Caco-2 (cell line): ENCODE measurements at regions of chr19 and their contacts with region 1.

Region 1: DNA sequence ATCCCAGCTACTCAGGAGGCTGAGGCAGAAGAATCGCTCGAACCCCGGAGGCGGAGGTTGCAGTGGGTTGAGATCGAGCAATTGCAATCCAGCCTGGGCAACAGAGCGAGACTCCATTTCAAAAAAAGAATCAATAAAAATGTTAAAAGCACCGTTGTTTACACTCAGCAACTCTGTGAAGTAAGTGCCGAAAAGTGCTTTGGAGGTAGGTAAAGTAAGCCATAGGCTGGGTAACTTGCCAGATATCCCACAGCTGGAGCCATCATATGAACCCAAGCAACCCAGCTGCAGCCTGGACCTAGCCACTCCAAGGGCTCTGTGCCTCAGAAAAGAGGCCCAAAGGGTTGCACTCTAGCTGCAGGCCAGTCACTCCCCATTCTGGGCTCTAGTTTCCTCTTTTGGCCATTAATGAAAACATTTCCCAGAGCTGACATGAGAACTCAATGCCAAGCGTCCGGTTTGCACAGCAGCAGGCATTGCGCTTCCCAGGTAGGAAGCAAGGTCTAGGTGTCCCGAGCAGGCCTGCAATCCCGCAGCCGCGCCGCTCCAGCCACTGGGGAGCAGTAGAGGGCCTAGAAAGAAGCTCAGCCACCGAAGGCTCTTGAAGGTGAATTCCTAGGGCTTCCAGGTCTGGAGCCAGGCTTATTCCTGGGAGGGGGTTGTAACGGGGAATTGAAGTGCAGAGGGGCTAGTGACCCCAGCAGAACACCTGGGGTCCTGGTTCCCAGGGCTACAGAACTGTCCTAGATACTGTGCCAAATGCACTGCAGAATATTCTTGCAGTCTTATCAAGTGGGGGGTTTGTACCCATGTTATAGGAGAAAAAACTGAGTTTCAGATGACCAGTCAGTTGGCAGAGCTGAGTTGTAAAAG is 4.1 kb upstream of the CD79A start:
- DNase-seq: peak; percentile 92 to 93
- H3K4me3 ChIP-seq: no peak overlapping the region
- H3K4me3 Mint-ChIP-seq: no peak overlapping the region
- H3K27ac Mint-ChIP-seq: peak overlapping the region; percentile 88
- H3K4me1 ChIP-seq: peaks cover 18% of the 10 kb centered on the region
- H3K4me1 Mint-ChIP-seq: peaks cover 9% of the 10 kb centered on the region
- H3K27me3 ChIP-seq: no peaks in the 10 kb centered on the region
- H3K27me3 Mint-ChIP-seq: no peaks in the 10 kb centered on the region
- CTCF ChIP-seq: peak; percentile 80 to 95

Region 2: DNA sequence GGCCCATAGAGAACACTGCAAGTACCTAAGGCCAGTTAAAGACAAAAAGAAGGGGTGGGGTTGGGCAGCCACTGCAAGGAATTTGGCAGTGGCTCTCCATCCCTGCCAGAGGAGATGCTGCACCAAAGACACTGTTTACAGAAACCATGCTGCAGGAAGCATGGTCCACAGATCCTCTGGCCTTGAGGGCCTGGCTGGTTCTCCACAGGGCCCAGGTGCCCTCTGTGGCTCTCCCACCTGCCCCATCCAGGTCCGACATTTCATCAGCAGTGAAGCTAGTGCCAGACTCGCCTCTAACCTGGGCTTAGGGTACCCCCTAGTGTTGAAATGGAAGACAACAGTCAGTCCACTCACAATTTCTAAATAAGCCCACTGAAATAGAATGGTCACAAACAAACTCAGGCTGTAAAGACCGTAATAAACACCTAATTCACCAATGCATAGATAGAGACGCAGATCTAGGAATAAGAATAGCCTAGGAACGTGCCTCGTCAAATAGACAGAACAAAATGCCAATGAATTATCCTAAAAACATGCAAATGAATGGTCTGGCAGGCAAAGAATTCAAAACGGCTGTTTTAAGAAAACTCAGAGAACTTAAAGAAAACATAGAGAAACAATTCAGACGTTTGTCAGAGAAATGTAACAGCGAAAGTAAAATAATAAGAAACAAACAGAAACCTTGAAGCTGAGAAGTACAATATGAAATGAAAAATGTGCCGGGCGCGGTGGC is 51.8 kb before region 1 on chr19:
- CTCF ChIA-PET with region 1: no interaction called
- POLR2A ChIA-PET with region 1: no interaction called
- intact Hi-C with region 1: no loop called
- DNase-seq: peak in 1 of 2 experiments; percentile 75
- H3K4me3 ChIP-seq: no peak overlapping the region
- H3K4me3 Mint-ChIP-seq: no peak overlapping the region
- H3K27ac Mint-ChIP-seq: no peak overlapping the region
- H3K4me1 ChIP-seq: no peaks in the 10 kb centered on the region
- H3K4me1 Mint-ChIP-seq: no peaks in the 10 kb centered on the region
- H3K27me3 ChIP-seq: no peaks in the 10 kb centered on the region
- H3K27me3 Mint-ChIP-seq: peaks cover 21% of the 10 kb centered on the region
- CTCF ChIP-seq: peak; percentile 66 to 81

Region 3: DNA sequence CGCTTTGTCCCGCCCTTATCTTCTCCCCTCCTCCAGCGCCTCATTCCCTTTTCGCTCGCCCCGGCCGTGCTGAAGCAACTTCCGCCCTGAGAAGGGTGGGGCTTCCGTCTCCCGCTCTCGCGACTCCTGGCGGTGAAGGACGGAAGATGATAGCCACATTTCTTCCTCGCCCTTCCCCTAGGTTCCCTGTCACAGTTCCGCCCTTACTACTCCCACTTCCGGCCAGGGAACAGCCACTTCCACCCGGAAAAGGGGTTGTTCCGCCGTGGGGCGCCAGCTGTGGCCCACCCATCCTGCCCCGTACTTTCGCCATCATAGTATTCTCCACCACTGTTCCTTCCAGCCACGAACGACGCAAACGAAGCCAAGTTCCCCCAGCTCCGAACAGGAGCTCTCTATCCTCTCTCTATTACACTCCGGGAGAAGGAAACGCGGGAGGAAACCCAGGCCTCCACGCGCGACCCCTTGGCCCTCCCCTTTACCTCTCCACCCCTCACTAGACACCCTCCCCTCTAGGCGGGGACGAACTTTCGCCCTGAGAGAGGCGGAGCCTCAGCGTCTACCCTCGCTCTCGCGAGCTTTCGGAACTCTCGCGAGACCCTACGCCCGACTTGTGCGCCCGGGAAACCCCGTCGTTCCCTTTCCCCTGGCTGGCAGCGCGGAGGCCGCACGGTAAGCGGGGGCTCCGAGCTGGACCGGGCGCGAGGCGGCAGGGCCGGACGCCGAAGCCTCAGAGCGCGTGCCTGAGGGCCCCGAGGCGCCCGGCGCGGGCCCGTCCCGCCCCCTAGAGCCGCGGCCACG is 13.2 kb before region 1 on chr19 and contains the start of gene RPS19:
- CTCF ChIA-PET with region 1: interaction called, 5 read pairs
- POLR2A ChIA-PET with region 1: interaction called, 21 read pairs
- intact Hi-C with region 1: no loop called
- DNase-seq: peak; percentile 98 to 99
- H3K4me3 ChIP-seq: peak within 1 kb of the TSS; percentile 88
- H3K4me3 Mint-ChIP-seq: peak within 1 kb of the TSS; percentile 84
- H3K27ac Mint-ChIP-seq: peak within 1 kb of the TSS; percentile 94
- H3K4me1 ChIP-seq: peaks cover 18% of the 10 kb centered on the region
- H3K4me1 Mint-ChIP-seq: peaks cover 5% of the 10 kb centered on the region
- H3K27me3 ChIP-seq: no peaks in the 10 kb centered on the region
- H3K27me3 Mint-ChIP-seq: peaks cover 1% of the 10 kb centered on the region
- CTCF ChIP-seq: peak; percentile 63 to 81
- total RNA-seq, gene RPS19: 3,297 and 3,418 TPM in 2 replicates

Region 4: GRCh38 chr19:41934849-41935374 is 61.9 kb after region 1 on chr19:
- CTCF ChIA-PET with region 1: interaction called, 3 read pairs
- POLR2A ChIA-PET with region 1: no interaction called
- intact Hi-C with region 1: loop called (anchors 1 kb)
- DNase-seq: peak; percentile 87 to 90
- H3K4me3 ChIP-seq: no peak overlapping the region
- H3K4me3 Mint-ChIP-seq: no peak overlapping the region
- H3K27ac Mint-ChIP-seq: no peak overlapping the region
- H3K4me1 ChIP-seq: peaks cover 16% of the 10 kb centered on the region
- H3K4me1 Mint-ChIP-seq: peaks cover 23% of the 10 kb centered on the region
- H3K27me3 ChIP-seq: no peaks in the 10 kb centered on the region
- H3K27me3 Mint-ChIP-seq: peaks cover 10% of the 10 kb centered on the region
- CTCF ChIP-seq: peak; percentile 88 to 93

Region 5: DNA sequence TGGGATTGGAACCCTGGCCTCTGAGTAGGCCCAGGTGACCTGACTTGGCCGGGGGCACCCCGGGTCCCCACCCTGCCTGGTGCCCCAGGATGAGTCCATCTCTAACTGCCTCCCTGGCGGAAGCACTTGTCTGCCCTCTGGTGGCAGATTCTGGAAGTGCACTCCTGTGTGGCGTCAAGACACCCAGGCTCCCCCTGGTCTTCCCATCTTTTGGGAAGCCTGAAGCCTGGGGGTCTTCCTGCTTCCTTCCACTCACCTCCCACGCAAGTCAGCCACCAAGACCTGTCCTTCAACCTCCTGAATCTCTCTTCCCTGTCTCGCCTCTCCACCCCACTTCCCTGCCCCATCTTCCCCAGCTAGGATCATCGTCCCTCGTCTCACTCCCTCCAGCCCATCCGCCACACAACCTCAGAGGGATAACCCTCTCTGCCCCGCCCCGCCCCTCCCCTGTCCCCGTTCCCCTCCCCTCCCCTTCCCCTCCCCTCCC is 78.7 kb after region 1 on chr19:
- CTCF ChIA-PET with region 1: interaction called, 5 read pairs
- POLR2A ChIA-PET with region 1: no interaction called
- intact Hi-C with region 1: loop called (anchors 1 kb)
- DNase-seq: peak; percentile 84 to 89
- H3K4me3 ChIP-seq: no peak overlapping the region
- H3K4me3 Mint-ChIP-seq: no peak overlapping the region
- H3K27ac Mint-ChIP-seq: no peak overlapping the region
- H3K4me1 ChIP-seq: no peaks in the 10 kb centered on the region
- H3K4me1 Mint-ChIP-seq: no peaks in the 10 kb centered on the region
- H3K27me3 ChIP-seq: no peaks in the 10 kb centered on the region
- H3K27me3 Mint-ChIP-seq: no peaks in the 10 kb centered on the region
- CTCF ChIP-seq: peak; percentile 98 to 99

Region 6: DNA sequence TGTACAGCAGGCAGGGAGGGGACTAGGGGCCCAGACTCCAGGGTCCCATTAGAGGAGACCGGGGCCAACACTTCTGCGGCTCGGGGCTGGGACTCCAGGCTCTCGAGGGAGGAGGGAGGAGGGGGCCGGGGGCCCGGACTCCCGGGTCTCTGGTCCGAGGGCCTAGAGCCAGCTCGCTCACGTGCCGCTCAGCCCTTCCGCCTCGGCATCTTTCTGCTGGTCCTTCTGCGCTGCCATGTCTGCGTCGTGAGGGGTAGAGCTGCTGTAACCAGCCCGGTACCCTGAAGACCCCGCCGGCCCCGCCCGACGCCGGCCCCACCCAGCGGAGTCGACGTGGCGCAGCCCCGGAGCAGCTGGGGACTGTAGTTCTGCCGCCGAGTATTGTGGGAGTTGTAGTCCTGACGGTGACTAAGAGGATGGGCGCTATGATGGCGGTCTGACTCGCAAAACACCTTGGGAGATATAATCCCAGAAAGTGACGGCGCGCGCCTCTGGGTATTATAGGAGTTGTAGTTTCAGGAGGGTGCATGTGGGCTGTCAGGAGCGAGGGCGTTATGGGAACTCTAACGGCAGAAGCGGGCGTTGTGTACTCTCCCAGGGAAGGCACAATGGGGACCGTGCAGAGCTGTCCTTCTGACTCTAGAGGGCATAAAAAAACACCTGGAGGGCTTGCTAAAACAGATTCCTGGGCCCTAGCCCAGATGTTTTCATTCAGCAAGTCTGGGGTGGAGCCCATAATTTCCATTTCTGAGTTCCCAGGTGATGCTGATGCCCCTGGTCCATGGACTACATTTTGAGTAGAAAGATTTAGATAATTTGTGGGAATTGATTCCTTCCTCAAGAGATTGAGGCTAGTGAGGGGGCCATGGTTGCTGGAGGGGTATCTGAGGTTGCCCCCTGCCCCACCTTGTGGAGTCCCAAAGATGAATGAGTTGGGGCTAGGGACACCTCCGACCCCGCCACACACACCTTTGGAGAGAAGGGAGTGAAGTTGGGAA is 86.3 kb after region 1 on chr19 and contains the start of gene RABAC1:
- CTCF ChIA-PET with region 1: interaction called, 18 read pairs
- POLR2A ChIA-PET with region 1: no interaction called
- intact Hi-C with region 1: loop called (anchors 1 kb)
- DNase-seq: peak; percentile 93 to 95
- H3K4me3 ChIP-seq: peak within 1 kb of the TSS; percentile 82
- H3K4me3 Mint-ChIP-seq: peak within 1 kb of the TSS; percentile 78
- H3K27ac Mint-ChIP-seq: peak within 1 kb of the TSS; percentile 81
- H3K4me1 ChIP-seq: peaks cover 14% of the 10 kb centered on the region
- H3K4me1 Mint-ChIP-seq: peaks cover 13% of the 10 kb centered on the region
- H3K27me3 ChIP-seq: no peaks in the 10 kb centered on the region
- H3K27me3 Mint-ChIP-seq: no peaks in the 10 kb centered on the region
- CTCF ChIP-seq: peak in 1 of 2 experiments; percentile 44
- total RNA-seq, gene RABAC1: 64.4 and 70.7 TPM in 2 replicates

Region 7: DNA sequence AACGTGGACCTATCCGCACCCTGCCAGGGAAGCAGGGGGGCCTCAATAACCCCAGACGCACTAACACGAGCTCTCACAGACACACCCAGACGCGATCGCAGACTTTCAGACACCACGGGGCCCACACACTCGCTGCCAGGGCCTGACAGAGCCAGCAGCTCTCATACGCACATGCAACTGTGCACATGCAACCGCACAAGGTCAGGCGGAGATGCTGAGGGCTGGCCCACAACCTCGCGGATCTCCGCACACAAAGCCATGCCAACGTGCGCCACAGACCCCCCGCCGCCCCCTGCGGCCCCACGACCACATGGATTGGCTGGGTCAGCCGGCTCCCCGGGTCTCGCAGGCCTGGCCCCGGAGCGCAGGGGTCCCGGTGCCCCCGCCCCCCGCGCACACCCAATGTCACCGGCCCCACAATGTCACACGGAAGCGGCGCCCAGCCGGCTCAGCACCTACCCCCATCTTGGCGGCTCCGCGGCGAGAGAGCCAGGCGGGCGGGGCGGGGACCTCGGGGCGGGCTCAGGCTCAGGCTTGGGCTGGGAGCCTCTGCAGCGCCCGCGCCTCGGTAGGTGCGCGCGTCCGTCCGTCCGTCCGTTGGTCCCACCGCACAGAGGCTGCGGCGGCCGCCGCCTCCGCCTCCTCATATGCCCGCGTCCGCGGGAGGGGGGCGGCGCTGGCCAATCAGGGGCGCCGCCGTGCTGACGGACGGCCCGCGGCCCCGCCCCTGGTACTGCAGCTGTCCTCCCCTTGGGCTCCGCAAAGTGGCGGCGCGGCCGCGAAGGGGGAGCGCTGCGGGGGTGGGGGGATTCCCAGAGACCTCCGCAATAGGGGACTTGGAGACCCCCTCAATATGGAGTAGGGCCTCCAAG is 120.8 kb after region 1 on chr19 and contains the start of gene ATP1A3:
- CTCF ChIA-PET with region 1: no interaction called
- POLR2A ChIA-PET with region 1: no interaction called
- intact Hi-C with region 1: no loop called
- DNase-seq: peak in 1 of 2 experiments; percentile 74
- H3K4me3 ChIP-seq: peak within 1 kb of the TSS; percentile 42
- H3K4me3 Mint-ChIP-seq: peak within 1 kb of the TSS; percentile 57
- H3K27ac Mint-ChIP-seq: no peak within 1 kb of the TSS
- H3K4me1 ChIP-seq: peaks cover 6% of the 10 kb centered on the region
- H3K4me1 Mint-ChIP-seq: no peaks in the 10 kb centered on the region
- H3K27me3 ChIP-seq: peaks cover 6% of the 10 kb centered on the region
- H3K27me3 Mint-ChIP-seq: peaks cover 36% of the 10 kb centered on the region
- CTCF ChIP-seq: no peak
- total RNA-seq, gene ATP1A3: 0.54 and 0.84 TPM in 2 replicates